Dendritic cell treated with granulocyte-macrophage colony-stimulating factor and Interleukin-4, amounts not matched to agents 40 ng/mL and 50 ng/mL, for 4 days (primary cell): ENCODE measurements at regions of chr1 and their contacts with region 1.

Region 1: GRCh38 chr1:152459596-152460528 is 45.8 kb upstream of the CRNN start:
- H3K4me3 Mint-ChIP-seq: peak overlapping the region; percentile 65
- H3K27ac Mint-ChIP-seq: peak overlapping the region; percentile 78
- H3K4me1 Mint-ChIP-seq: peaks cover 22% of the 10 kb centered on the region
- H3K27me3 Mint-ChIP-seq: peaks cover 18% of the 10 kb centered on the region

Region 2: DNA sequence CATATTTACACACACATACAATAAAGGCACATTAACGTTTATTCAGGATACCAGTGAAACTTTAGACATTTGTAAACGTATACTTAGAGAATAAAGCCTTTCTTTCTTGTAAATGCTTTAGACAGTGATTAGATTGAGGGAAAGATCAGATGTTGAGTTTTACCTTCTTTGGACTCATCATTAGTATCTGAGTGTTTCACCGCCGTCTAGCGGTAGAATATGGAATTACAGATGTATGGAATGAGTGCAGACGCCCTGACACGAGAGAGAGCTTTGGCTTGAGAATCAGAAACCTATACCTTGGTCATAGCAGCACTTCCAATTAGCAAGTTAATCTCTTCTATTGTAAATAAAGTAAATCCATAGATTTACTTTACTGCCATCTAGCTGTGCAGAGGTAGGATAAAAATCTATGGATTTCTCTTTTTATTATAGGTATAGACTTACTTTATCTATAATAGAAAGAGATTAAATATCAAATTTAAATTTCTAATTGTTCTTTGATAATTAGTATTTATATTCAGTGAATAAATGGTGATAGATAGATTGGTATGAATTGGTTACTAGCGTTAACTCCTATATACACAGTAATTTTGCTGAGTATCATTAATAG is 112.6 kb before region 1 on chr1:
- intact Hi-C with region 1: loop called (anchors 5 kb)
- H3K4me3 Mint-ChIP-seq: no peak overlapping the region
- H3K27ac Mint-ChIP-seq: no peak overlapping the region
- H3K4me1 Mint-ChIP-seq: no peaks in the 10 kb centered on the region
- H3K27me3 Mint-ChIP-seq: peaks cover 16% of the 10 kb centered on the region

Region 3: DNA sequence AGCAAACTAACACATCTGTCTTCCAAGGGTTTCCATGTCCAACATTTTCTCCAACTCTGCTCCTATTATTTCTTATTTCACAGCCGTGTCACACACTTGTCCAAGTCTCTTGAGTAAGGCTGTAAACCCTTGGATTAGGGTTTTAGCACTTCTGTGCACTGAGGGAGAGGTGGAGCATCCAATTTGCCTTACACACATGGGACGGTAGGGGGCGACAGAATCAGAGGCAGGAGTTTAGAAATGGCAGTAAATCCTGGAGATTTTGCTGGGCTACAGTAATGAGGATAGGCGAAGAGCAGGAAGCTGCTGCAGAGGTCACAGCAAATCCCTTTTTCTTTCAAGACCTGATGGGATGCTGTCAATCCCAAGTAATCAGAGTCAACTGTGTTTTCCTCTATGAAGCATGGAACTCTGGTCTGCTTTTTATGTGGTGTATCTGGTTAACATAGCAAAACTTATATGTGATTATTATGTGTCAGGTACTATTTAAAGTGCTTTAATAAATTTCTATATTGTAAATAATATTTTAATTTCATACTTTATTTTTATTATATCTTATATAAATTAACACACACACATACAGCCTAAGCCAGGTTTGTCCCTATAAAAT is 35.3 kb after region 1 on chr1:
- intact Hi-C with region 1: no loop called
- H3K4me3 Mint-ChIP-seq: no peak overlapping the region
- H3K27ac Mint-ChIP-seq: no peak overlapping the region
- H3K4me1 Mint-ChIP-seq: no peaks in the 10 kb centered on the region
- H3K27me3 Mint-ChIP-seq: peaks cover 1% of the 10 kb centered on the region

Region 4: GRCh38 chr1:153100236-153100635 is 640.4 kb after region 1 on chr1:
- intact Hi-C with region 1: no loop called
- H3K4me3 Mint-ChIP-seq: no peak overlapping the region
- H3K27ac Mint-ChIP-seq: no peak overlapping the region
- H3K4me1 Mint-ChIP-seq: no peaks in the 10 kb centered on the region
- H3K27me3 Mint-ChIP-seq: peaks cover 2% of the 10 kb centered on the region

Region 5: DNA sequence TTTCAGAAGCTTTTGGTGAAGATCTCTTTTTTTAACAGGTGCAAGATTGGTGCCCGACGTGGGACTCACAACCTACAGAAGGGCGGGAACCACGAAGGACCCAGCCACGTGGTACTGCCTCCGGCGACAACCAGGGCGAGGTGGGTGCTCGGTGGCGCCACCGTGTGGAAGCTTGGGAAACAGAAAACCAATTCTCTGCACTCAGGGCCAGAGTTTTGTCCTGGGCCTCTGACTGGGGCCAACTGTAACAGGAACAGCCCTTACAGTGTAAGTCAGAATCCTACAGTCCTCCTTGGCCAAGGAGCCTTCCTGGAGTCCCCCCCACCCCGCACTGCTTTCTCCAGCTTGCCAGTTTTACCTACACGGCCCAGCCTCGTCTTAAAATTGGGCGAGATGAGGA is 944.9 kb after region 1 on chr1:
- intact Hi-C with region 1: no loop called
- H3K4me3 Mint-ChIP-seq: no peak overlapping the region
- H3K27ac Mint-ChIP-seq: no peak overlapping the region
- H3K4me1 Mint-ChIP-seq: peaks cover 45% of the 10 kb centered on the region
- H3K27me3 Mint-ChIP-seq: peaks cover 19% of the 10 kb centered on the region